ENCODE measurements at regions of chr6 and their contacts with region 1.

Region 1: GRCh38 chr6:97215157-97215769 is 67.8 kb downstream of the MMS22L start:
- DNase-seq: peak; percentile 43
- H3K4me3 Mint-ChIP-seq: no peak overlapping the region
- H3K27ac Mint-ChIP-seq: no peak overlapping the region
- H3K4me1 Mint-ChIP-seq: no peaks in the 10 kb centered on the region
- H3K27me3 Mint-ChIP-seq: no peaks in the 10 kb centered on the region
- CTCF ChIP-seq: peak; percentile 31

Region 2: GRCh38 chr6:97186416-97186999 is 28.8 kb before region 1 on chr6:
- CTCF ChIA-PET with region 1: interaction called, 32 read pairs
- POLR2A ChIA-PET with region 1: interaction called, 4 read pairs
- intact Hi-C with region 1: no loop called
- DNase-seq: peak; percentile 78
- H3K4me3 Mint-ChIP-seq: no peak overlapping the region
- H3K27ac Mint-ChIP-seq: no peak overlapping the region
- H3K4me1 Mint-ChIP-seq: peaks cover 6% of the 10 kb centered on the region
- H3K27me3 Mint-ChIP-seq: no peaks in the 10 kb centered on the region
- CTCF ChIP-seq: peak; percentile 77

Region 3: DNA sequence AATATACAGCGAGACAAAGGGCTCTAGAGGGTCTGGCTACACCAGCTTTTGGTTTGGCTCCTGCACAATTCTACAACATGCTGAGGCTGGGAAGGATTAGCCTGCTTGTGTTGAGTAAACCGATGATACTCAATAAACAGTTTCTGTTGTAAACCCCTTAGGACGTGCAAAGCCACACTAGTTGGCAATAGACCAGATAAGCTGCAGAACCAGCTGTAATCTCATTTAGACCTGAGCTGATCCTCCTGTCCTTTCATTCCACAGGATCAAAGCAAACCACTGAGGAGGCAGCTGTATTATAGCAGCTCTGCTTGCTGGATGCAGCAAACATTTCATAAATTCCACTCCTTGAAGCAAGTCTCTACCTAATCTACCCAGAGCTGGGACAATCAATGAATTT is 11.9 kb before region 1 on chr6:
- CTCF ChIA-PET with region 1: interaction called, 14 read pairs
- POLR2A ChIA-PET with region 1: interaction called, 4 read pairs
- intact Hi-C with region 1: no loop called
- DNase-seq: no peak
- H3K4me3 Mint-ChIP-seq: no peak overlapping the region
- H3K27ac Mint-ChIP-seq: no peak overlapping the region
- H3K4me1 Mint-ChIP-seq: no peaks in the 10 kb centered on the region
- H3K27me3 Mint-ChIP-seq: no peaks in the 10 kb centered on the region
- CTCF ChIP-seq: no peak

Region 4: DNA sequence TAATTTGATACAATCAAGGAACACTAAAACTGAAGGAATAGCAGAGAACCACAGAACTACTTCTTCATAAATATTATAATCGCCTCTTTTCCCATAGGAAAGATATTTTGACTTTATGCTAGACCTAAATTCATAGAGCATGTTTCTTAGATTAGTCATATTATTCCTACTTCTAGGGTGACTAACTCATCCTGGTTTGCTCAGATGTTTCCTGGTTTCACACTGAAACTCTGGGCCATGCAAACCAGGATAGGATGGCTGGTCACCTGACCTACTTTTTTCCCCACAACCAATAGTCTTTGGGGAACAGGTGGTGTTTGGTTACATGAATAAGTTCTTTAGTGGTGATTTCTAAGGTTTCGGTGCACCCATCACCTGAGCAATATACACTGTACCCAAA is 25.0 kb after region 1 on chr6:
- CTCF ChIA-PET with region 1: interaction called, 16 read pairs
- POLR2A ChIA-PET with region 1: no interaction called
- intact Hi-C with region 1: no loop called
- DNase-seq: peak; percentile 43
- H3K4me3 Mint-ChIP-seq: no peak overlapping the region
- H3K27ac Mint-ChIP-seq: no peak overlapping the region
- H3K4me1 Mint-ChIP-seq: no peaks in the 10 kb centered on the region
- H3K27me3 Mint-ChIP-seq: no peaks in the 10 kb centered on the region
- CTCF ChIP-seq: no peak

Region 5: GRCh38 chr6:97394160-97394748 is 179.0 kb after region 1 on chr6:
- CTCF ChIA-PET with region 1: interaction called, 38 read pairs
- POLR2A ChIA-PET with region 1: interaction called, 4 read pairs
- intact Hi-C with region 1: loop called (anchors 1 kb)
- DNase-seq: peak; percentile 74
- H3K4me3 Mint-ChIP-seq: no peak overlapping the region
- H3K27ac Mint-ChIP-seq: no peak overlapping the region
- H3K4me1 Mint-ChIP-seq: no peaks in the 10 kb centered on the region
- H3K27me3 Mint-ChIP-seq: peaks cover 52% of the 10 kb centered on the region
- CTCF ChIP-seq: peak; percentile 84